ENCODE measurements at regions of chr16 and their contacts with region 1.

Region 1: GRCh38 chr16:58843675-58844074 is 109.6 kb upstream of the GOT2 start:
- DNase-seq: peak; percentile 42
- H3K4me3 ChIP-seq: no peak overlapping the region
- H3K27ac ChIP-seq: no peak overlapping the region
- H3K4me1 ChIP-seq: no peaks in the 10 kb centered on the region
- H3K27me3 ChIP-seq: no peaks in the 10 kb centered on the region
- CTCF ChIP-seq: peak; percentile 40
- EP300 ChIP-seq: no peak
- RAD21 ChIP-seq: peak; percentile 61

Region 2: DNA sequence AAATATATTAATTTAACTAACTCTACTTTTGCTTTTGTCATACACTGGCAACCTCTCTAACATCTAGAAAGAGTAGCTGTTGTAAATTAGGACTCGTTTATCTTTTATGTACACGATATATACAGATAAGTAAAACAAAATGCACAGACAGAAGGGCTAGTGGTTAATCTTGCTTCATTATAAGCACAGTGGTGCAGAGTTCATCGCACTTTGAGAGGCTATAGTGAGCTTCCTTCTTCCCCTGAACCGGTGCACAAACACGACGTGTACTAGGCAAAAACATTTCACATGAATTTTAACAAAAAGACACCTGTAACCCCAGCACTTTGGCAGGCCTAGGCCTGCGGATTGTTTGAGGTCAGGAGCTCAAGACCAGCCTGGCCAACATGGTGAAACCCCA is 99.2 kb before region 1 on chr16:
- CTCF ChIA-PET with region 1: no interaction called
- POLR2A ChIA-PET with region 1: no interaction called
- DNase-seq: no peak
- H3K4me3 ChIP-seq: no peak overlapping the region
- H3K27ac ChIP-seq: no peak overlapping the region
- H3K4me1 ChIP-seq: no peaks in the 10 kb centered on the region
- H3K27me3 ChIP-seq: no peaks in the 10 kb centered on the region
- CTCF ChIP-seq: no peak
- EP300 ChIP-seq: no peak
- RAD21 ChIP-seq: no peak

Region 3: GRCh38 chr16:58832386-58832895 is 11.2 kb before region 1 on chr16:
- CTCF ChIA-PET with region 1: interaction called, 14 read pairs
- POLR2A ChIA-PET with region 1: no interaction called
- DNase-seq: no peak
- H3K4me3 ChIP-seq: no peak overlapping the region
- H3K27ac ChIP-seq: no peak overlapping the region
- H3K4me1 ChIP-seq: no peaks in the 10 kb centered on the region
- H3K27me3 ChIP-seq: no peaks in the 10 kb centered on the region
- CTCF ChIP-seq: no peak
- EP300 ChIP-seq: no peak
- RAD21 ChIP-seq: peak; percentile 10; the same call in 1 of the 2 replicates

Region 4: GRCh38 chr16:58882292-58882691 is 38.6 kb after region 1 on chr16:
- CTCF ChIA-PET with region 1: interaction called, 10 read pairs
- POLR2A ChIA-PET with region 1: no interaction called
- DNase-seq: no peak
- H3K4me3 ChIP-seq: no peak overlapping the region
- H3K27ac ChIP-seq: no peak overlapping the region
- H3K4me1 ChIP-seq: no peaks in the 10 kb centered on the region
- H3K27me3 ChIP-seq: no peaks in the 10 kb centered on the region
- CTCF ChIP-seq: no peak
- EP300 ChIP-seq: no peak
- RAD21 ChIP-seq: no peak